ENCODE measurements at regions of chr4 and their contacts with region 1.

Region 1: GRCh38 chr4:152500800-152501434 is 35.0 kb downstream of the FBXW7 start:
- DNase-seq: peak; percentile 63
- ATAC-seq: peak; percentile 67
- H3K4me3 Mint-ChIP-seq: no peak overlapping the region
- H3K27ac Mint-ChIP-seq: no peak overlapping the region
- H3K4me1 Mint-ChIP-seq: peaks cover 26% of the 10 kb centered on the region
- H3K27me3 Mint-ChIP-seq: no peaks in the 10 kb centered on the region

Region 2: DNA sequence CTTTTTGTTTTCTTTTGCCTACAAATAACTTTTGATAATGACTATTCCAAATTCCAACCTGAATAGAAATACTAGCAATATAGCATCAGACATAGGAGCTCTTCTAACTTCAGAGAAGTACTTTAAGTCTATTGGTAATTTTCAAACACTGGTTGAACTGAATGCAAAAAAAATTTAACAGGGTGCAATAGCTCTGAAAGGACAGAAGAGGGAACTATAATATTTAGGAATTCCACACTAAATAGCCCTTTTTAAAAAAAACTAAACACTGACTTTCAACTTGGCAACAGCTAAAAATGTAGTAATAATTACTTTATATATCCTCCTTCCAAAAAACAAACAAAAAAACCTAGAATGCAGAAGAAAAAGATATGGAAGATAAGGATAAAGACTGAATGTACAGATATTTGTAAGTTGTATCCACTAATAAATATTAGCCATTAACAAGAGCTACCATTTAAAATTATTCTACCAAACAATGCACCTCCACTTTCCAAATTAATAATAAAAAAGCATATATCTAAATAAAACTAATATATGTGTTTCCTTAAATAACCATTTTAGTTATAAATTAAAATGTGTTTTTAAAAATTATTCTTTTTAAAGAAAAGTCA is 46.4 kb before region 1 on chr4:
- CTCF ChIA-PET with region 1: interaction called, 24 read pairs
- POLR2A ChIA-PET with region 1: no interaction called
- intact Hi-C with region 1: loop called in 1 of 2 experiments (anchors 1 kb)
- DNase-seq: no peak
- ATAC-seq: no peak
- H3K4me3 Mint-ChIP-seq: no peak overlapping the region
- H3K27ac Mint-ChIP-seq: no peak overlapping the region
- H3K4me1 Mint-ChIP-seq: peaks cover 34% of the 10 kb centered on the region
- H3K27me3 Mint-ChIP-seq: no peaks in the 10 kb centered on the region

Region 3: GRCh38 chr4:152485726-152486276 is 15.1 kb before region 1 on chr4:
- CTCF ChIA-PET with region 1: interaction called, 46 read pairs
- POLR2A ChIA-PET with region 1: no interaction called
- intact Hi-C with region 1: no loop called
- DNase-seq: peak; percentile 25
- ATAC-seq: peak; percentile 100
- H3K4me3 Mint-ChIP-seq: no peak overlapping the region
- H3K27ac Mint-ChIP-seq: no peak overlapping the region
- H3K4me1 Mint-ChIP-seq: peaks cover 43% of the 10 kb centered on the region
- H3K27me3 Mint-ChIP-seq: no peaks in the 10 kb centered on the region

Region 4: GRCh38 chr4:152535903-152536544 is 35.1 kb after region 1 on chr4 and contains the start of gene FBXW7:
- CTCF ChIA-PET with region 1: interaction called, 18 read pairs
- POLR2A ChIA-PET with region 1: interaction called, 6 read pairs
- intact Hi-C with region 1: no loop called
- DNase-seq: peak; percentile 99
- ATAC-seq: peak; percentile 87
- H3K4me3 Mint-ChIP-seq: peak within 1 kb of the TSS; percentile 82
- H3K27ac Mint-ChIP-seq: peak within 1 kb of the TSS; percentile 98
- H3K4me1 Mint-ChIP-seq: peaks cover 51% of the 10 kb centered on the region
- H3K27me3 Mint-ChIP-seq: no peaks in the 10 kb centered on the region
- total RNA-seq, gene FBXW7: 29.8 to 31.6 TPM

Region 5: DNA sequence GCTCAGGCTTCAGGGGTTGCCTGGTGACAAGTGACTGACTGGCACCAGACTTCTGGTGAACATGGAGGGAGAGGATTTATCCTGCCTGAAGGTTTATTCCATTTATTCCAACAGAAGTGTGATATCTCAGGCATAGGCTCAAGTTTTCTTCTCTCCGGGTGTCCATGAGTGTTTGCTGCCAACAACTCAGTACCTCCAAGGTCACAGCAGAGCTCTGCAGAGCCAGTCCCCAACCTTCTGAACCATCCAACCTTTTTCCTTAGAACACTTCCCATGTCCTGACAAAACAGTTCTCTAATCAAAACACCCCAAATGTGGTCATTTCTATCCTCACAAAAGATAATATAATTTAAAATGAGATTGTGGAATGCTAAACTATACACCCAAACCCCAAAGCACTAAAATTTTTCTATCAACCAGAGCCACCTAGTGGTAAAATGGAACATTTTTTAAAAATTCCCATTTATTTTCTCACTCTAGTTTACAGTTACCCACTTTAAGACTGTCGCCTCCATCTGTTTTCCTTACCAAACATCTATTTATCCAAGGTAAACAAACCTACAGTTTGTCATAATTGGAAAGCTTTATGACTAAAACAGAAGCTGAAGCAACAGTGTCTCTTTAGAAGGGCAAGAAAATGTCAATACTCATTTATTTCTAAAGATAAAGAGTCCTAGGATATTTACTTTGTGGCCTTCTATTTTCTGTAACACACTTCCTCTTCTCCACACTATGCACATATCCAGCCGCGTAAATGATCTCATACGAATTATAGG is 139.3 kb after region 1 on chr4:
- CTCF ChIA-PET with region 1: interaction called, 208 read pairs
- POLR2A ChIA-PET with region 1: no interaction called
- intact Hi-C with region 1: loop called (anchors 1 kb)
- DNase-seq: no peak
- ATAC-seq: peak; percentile 37
- H3K4me3 Mint-ChIP-seq: no peak overlapping the region
- H3K27ac Mint-ChIP-seq: no peak overlapping the region
- H3K4me1 Mint-ChIP-seq: peaks cover 31% of the 10 kb centered on the region
- H3K27me3 Mint-ChIP-seq: no peaks in the 10 kb centered on the region

Region 6: DNA sequence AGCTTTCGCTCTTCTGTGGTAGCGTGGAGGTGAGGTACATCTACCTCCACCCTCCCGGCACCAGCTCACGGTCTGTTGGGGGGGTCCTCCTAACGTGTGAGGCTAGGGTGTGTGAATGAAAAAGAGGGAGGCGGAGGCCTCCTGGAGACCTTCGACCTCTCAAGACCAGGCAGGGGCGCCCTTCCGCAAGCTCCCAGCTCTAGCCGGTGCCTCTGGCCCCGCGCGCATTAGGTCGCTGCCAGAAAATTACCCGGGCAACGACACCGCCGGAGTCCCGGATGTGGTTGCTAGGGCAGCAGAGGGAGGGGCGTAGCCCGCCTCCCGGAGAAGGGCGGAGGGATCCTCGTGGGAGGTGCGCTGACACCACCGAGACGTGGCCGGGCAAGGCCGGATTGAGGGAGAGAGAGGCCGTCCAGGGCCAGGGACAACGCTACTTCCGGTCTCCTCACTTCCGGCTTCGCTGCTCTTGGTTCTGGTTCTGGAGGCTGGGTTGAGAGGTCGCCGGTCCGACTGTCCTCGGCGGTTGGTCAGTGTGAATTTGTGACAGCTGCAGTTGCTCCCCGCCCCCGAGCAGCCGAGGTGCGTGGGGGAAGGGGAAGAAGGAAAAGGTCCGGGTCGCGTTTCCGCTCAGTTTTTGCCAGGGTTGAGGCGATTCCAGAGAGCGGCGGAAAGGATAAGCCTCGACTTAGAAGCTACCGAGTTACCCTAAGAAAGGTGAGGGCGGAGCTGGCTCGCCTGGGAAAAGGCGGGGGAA is 278.8 kb after region 1 on chr4 and contains the starts of genes ARFIP1 and TIGD4:
- CTCF ChIA-PET with region 1: interaction called, 13 read pairs
- POLR2A ChIA-PET with region 1: no interaction called
- intact Hi-C with region 1: no loop called
- DNase-seq: peak; percentile 97
- ATAC-seq: peak; percentile 91
- H3K4me3 Mint-ChIP-seq: peak within 1 kb of the TSS; percentile 96
- H3K27ac Mint-ChIP-seq: peak within 1 kb of the TSS; percentile 94
- H3K4me1 Mint-ChIP-seq: peaks cover 44% of the 10 kb centered on the region
- H3K27me3 Mint-ChIP-seq: peaks cover 5% of the 10 kb centered on the region
- total RNA-seq, gene ARFIP1: 8.4 to 10.5 TPM
- total RNA-seq, gene TIGD4: 0.27 to 0.28 TPM